ENCODE measurements at regions of chr14 and their contacts with region 1.

Region 1: GRCh38 chr14:92585981-92586937 is 72.7 kb downstream of the RIN3 start:
- DNase-seq: peak; percentile 84
- H3K4me3 Mint-ChIP-seq: peak overlapping the region; percentile 69
- H3K27ac Mint-ChIP-seq: peak overlapping the region; percentile 87
- H3K4me1 Mint-ChIP-seq: peaks cover 67% of the 10 kb centered on the region
- H3K27me3 Mint-ChIP-seq: peaks cover 8% of the 10 kb centered on the region

Region 2: GRCh38 chr14:92340931-92341330 is 245.3 kb before region 1 on chr14:
- intact Hi-C with region 1: loop called (anchors 1 kb)
- DNase-seq: peak; percentile 56
- H3K4me3 Mint-ChIP-seq: peak overlapping the region; percentile 21
- H3K27ac Mint-ChIP-seq: peak overlapping the region; percentile 10
- H3K4me1 Mint-ChIP-seq: peaks cover 15% of the 10 kb centered on the region
- H3K27me3 Mint-ChIP-seq: peaks cover 56% of the 10 kb centered on the region

Region 3: DNA sequence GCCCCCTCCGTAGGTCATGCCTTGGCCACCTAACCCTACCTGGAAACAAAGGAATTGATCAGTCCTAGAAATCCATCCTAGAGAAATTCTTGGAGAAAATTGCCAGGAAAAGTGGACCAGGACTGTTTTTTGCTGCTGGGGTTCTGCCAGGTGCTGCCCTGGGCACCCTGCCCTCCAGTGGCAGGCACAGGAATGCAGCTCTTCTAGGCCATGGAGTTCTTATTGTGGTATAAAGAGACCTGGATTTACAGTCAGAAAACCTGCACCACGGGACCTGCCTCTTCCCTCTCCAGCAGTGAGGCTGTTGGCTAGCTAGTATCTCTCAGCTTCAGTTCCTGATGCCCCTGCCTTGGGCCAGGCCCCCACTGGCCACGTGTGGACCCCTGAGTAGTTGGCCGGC is 203.6 kb before region 1 on chr14:
- intact Hi-C with region 1: no loop called
- DNase-seq: no peak
- H3K4me3 Mint-ChIP-seq: no peak overlapping the region
- H3K27ac Mint-ChIP-seq: no peak overlapping the region
- H3K4me1 Mint-ChIP-seq: no peaks in the 10 kb centered on the region
- H3K27me3 Mint-ChIP-seq: peaks cover under 1% of the 10 kb centered on the region

Region 4: GRCh38 chr14:92556255-92556741 is 30.0 kb before region 1 on chr14:
- intact Hi-C with region 1: loop called (anchors 1 kb)
- DNase-seq: no peak
- H3K4me3 Mint-ChIP-seq: peak overlapping the region; percentile 33
- H3K27ac Mint-ChIP-seq: peak overlapping the region; percentile 88
- H3K4me1 Mint-ChIP-seq: peaks cover 62% of the 10 kb centered on the region
- H3K27me3 Mint-ChIP-seq: peaks cover 17% of the 10 kb centered on the region

Region 5: GRCh38 chr14:92563359-92563758 is 22.9 kb before region 1 on chr14:
- intact Hi-C with region 1: loop called (anchors 1 kb)
- DNase-seq: peak; percentile 79
- H3K4me3 Mint-ChIP-seq: peak overlapping the region; percentile 30
- H3K27ac Mint-ChIP-seq: peak overlapping the region; percentile 58
- H3K4me1 Mint-ChIP-seq: peaks cover 56% of the 10 kb centered on the region
- H3K27me3 Mint-ChIP-seq: peaks cover 4% of the 10 kb centered on the region

Region 6: GRCh38 chr14:92651106-92651757 is 65.0 kb after region 1 on chr14:
- intact Hi-C with region 1: loop called (anchors 1 kb)
- DNase-seq: peak; percentile 94
- H3K4me3 Mint-ChIP-seq: peak overlapping the region; percentile 94
- H3K27ac Mint-ChIP-seq: peak overlapping the region; percentile 98
- H3K4me1 Mint-ChIP-seq: peaks cover 73% of the 10 kb centered on the region
- H3K27me3 Mint-ChIP-seq: no peaks in the 10 kb centered on the region

Region 7: GRCh38 chr14:92729626-92730358 is 143.5 kb after region 1 on chr14:
- intact Hi-C with region 1: loop called (anchors 1 kb)
- DNase-seq: peak; percentile 62
- H3K4me3 Mint-ChIP-seq: no peak overlapping the region
- H3K27ac Mint-ChIP-seq: peak overlapping the region; percentile 74
- H3K4me1 Mint-ChIP-seq: peaks cover 21% of the 10 kb centered on the region
- H3K27me3 Mint-ChIP-seq: peaks cover 47% of the 10 kb centered on the region

Region 8: GRCh38 chr14:93410021-93410420 is 823.8 kb after region 1 on chr14:
- intact Hi-C with region 1: no loop called
- DNase-seq: no peak
- H3K4me3 Mint-ChIP-seq: no peak overlapping the region
- H3K27ac Mint-ChIP-seq: no peak overlapping the region
- H3K4me1 Mint-ChIP-seq: no peaks in the 10 kb centered on the region
- H3K27me3 Mint-ChIP-seq: no peaks in the 10 kb centered on the region